ENCODE measurements at regions of chr17 and their contacts with region 1.

Region 1: GRCh38 chr17:71472809-71473789 is 647.7 kb upstream of the SOX9 start:
- DNase-seq: peak; percentile 55 to 68
- ATAC-seq: peak; percentile 93 to 94
- H3K4me3 ChIP-seq: no peak overlapping the region
- H3K27ac ChIP-seq: 0 out of 6 replicates have a peak overlapping the region, but pooled peaks of 1 of the 2 experiments have one; percentile 10
- H3K4me1 ChIP-seq: peaks cover 3% of the 10 kb centered on the region; the same call in 1 of the 3 replicates
- CTCF ChIP-seq: peak; percentile 87
- EP300 ChIP-seq: no peak
- POLR2A ChIP-seq: no peak
- RAD21 ChIP-seq: peak; percentile 76 to 84

Region 2: DNA sequence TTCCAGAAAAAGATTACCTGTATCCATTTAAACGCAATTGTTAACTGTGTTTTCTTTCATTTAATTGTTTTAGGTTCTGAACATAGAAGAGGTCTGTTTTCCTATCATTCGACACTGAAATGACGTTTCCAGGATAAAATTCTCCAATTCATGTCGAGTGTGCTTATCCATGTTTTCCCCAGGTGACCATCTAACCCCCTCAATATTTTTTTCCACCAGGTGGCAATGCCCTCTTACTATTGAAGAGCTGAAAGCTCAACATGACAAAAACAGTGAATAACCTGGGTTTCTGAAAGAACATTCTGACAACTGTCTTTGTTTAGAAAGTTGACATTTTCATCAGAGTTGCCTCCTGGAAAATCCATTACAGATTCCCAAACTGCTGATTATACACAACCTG is 355.1 kb before region 1 on chr17:
- CTCF ChIA-PET with region 1: interaction called, 10 read pairs
- POLR2A ChIA-PET with region 1: no interaction called
- DNase-seq: peak; percentile 14 to 26
- ATAC-seq: no peak; a peak in 1 of 6 replicates
- H3K4me3 ChIP-seq: no peak overlapping the region
- H3K27ac ChIP-seq: no peak overlapping the region
- H3K4me1 ChIP-seq: no peaks in the 10 kb centered on the region
- CTCF ChIP-seq: peak; percentile 44; the same call in 2 of the 3 replicates
- EP300 ChIP-seq: no peak
- POLR2A ChIP-seq: no peak
- RAD21 ChIP-seq: peak; percentile 68 to 70

Region 3: GRCh38 chr17:71327376-71328059 is 145.6 kb before region 1 on chr17:
- CTCF ChIA-PET with region 1: no interaction called
- POLR2A ChIA-PET with region 1: no interaction called
- DNase-seq: no peak
- ATAC-seq: no peak
- H3K4me3 ChIP-seq: no peak overlapping the region
- H3K27ac ChIP-seq: no peak overlapping the region
- H3K4me1 ChIP-seq: peaks cover 15% of the 10 kb centered on the region; the same call in 1 of the 3 replicates
- CTCF ChIP-seq: no peak
- EP300 ChIP-seq: no peak
- POLR2A ChIP-seq: no peak
- RAD21 ChIP-seq: no peak

Region 4: GRCh38 chr17:71628306-71628705 is 155.2 kb after region 1 on chr17:
- CTCF ChIA-PET with region 1: no interaction called
- POLR2A ChIA-PET with region 1: no interaction called
- DNase-seq: no peak
- ATAC-seq: no peak
- H3K4me3 ChIP-seq: no peak overlapping the region
- H3K27ac ChIP-seq: no peak overlapping the region
- H3K4me1 ChIP-seq: peaks cover 18% of the 10 kb centered on the region
- CTCF ChIP-seq: no peak
- EP300 ChIP-seq: no peak
- POLR2A ChIP-seq: no peak
- RAD21 ChIP-seq: no peak

Measured in A549 (cell line).